ENCODE measurements at regions of chr2 and their contacts with region 1.

Region 1: DNA sequence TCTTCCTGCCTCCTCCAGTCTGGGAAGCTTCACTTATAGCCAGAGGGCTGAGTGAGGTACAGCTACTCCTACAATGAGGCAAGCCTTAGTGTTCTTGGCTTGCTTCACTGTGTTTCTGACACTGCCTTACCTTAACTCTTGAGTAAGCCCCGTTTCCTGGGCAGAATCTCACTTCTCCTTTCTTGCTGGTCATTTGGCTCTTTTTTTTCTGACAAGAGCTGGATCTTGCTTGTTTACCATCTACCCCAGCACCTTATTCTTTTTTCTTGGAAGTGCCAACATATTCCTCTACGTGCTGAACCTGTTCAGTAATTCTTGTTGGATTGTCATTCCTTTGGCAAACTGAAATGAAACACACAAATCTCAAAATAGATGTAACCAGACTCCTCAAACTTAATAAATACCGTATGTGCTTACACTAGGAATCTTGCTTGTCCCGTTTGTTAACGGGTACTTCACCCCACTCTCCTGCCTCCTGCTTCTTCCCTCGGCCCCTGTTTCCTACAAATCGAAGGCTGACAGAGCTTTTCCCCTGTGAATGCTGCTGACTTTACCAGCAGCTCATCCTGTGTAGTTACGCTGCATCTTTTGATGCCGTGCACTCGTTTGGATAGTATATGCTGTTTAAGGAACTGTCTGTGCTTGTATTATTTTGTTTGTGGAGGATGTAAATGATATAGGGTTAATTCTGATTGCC is 132.2 kb downstream of the FMNL2 start:
- DNase-seq: peak; percentile 70
- ATAC-seq: peak; percentile 77 to 78
- H3K4me3 ChIP-seq: peak overlapping the region; percentile 8 to 41 (median 38)
- H3K27ac ChIP-seq: peak overlapping the region; percentile 89 to 91 (median 90)
- H3K4me1 ChIP-seq: peaks cover 96 to 100% of the 10 kb centered on the region in 2 donors
- H3K27me3 ChIP-seq: no peaks in the 10 kb centered on the region
- CTCF ChIP-seq: no peak
- POLR2A ChIP-seq: peak; percentile 14 to 42

Region 2: GRCh38 chr2:152573168-152573567 is 106.0 kb after region 1 on chr2:
- in situ Hi-C with region 1: no loop called
- intact Hi-C with region 1: loop called (anchors 5 kb)
- DNase-seq: peak; percentile 69 to 75
- ATAC-seq: peak; percentile 91
- H3K4me3 ChIP-seq: no peak overlapping the region
- H3K27ac ChIP-seq: peak overlapping the region in 3 of 4 donors; percentile 12 to 80 (median 61)
- H3K4me1 ChIP-seq: peaks cover 31 to 34% of the 10 kb centered on the region in 2 donors
- H3K27me3 ChIP-seq: no peaks in the 10 kb centered on the region
- CTCF ChIP-seq: no peak
- POLR2A ChIP-seq: peak; percentile 16 to 36

Region 3: DNA sequence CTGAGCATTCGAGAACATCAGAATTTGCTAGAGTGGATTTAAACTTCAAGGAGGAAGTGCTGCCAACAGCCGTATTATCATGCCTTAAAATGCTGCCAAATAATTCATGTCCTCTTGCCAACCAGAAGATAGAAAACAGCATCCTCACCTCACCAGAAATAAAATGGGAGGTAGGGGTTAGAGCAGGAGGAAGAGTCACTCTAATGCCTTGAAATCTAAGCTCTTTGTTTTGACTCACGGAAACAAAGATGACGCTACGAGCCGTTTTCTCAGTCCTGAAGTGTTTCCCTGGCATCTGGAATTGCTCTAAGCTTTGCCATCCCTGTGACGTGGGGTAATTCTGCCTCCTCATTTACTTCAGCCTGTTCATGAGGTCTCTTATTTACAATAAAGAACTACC is 153.1 kb after region 1 on chr2:
- in situ Hi-C with region 1: no loop called
- intact Hi-C with region 1: loop called (anchors 5 kb)
- DNase-seq: peak; percentile 29 to 35
- ATAC-seq: peak; percentile 81 to 89
- H3K4me3 ChIP-seq: no peak overlapping the region
- H3K27ac ChIP-seq: peak overlapping the region; percentile 73 to 81 (median 76)
- H3K4me1 ChIP-seq: peaks cover 19 to 51% of the 10 kb centered on the region in 2 donors
- H3K27me3 ChIP-seq: no peaks in the 10 kb centered on the region
- CTCF ChIP-seq: no peak
- POLR2A ChIP-seq: no peak

Region 4: GRCh38 chr2:153230977-153231376 is 763.8 kb after region 1 on chr2:
- in situ Hi-C with region 1: no loop called
- intact Hi-C with region 1: no loop called
- DNase-seq: no peak
- ATAC-seq: no peak
- H3K4me3 ChIP-seq: no peak overlapping the region
- H3K27ac ChIP-seq: no peak overlapping the region
- H3K4me1 ChIP-seq: no peaks in the 10 kb centered on the region
- H3K27me3 ChIP-seq: no peaks in the 10 kb centered on the region
- CTCF ChIP-seq: no peak
- POLR2A ChIP-seq: no peak

Measured in gastrocnemius medialis (tissue), 4 donors.